ENCODE measurements at regions of chr4 and their contacts with region 1.

Region 1: DNA sequence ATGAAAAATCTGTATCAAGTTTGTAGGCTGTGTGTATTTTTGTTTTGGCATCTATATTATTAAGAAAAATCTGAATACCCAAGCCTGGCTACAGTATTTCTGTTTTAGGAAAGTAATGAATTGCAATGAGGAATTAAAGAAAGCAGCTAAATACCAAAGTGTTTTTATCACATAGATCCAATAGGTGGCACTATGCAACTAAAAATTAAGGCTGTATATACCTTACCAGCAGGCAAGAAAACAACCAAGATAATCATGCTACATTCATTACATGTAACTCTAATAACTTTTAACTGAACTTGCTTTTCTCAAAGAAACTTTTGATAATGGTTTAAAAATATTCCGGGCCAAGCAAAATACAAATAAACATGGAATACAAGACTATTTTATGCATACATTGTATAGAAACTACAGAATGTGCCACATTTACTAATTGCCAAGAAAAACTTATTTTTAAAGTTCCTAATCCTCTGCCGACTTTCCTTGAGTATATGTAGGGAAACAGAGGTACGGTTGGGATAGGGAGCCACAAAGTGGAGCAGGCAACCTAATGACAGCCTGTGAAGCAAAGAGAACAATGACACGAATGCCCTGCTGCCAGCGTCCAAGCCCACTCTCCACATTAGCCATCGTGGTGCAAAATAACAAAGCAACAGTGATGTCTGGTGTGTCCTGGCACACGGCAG is 63.7 kb downstream of the SEC24D start:
- H3K4me3 Mint-ChIP-seq: no peak overlapping the region
- H3K27ac Mint-ChIP-seq: no peak overlapping the region
- H3K4me1 Mint-ChIP-seq: no peaks in the 10 kb centered on the region
- H3K27me3 Mint-ChIP-seq: no peaks in the 10 kb centered on the region

Region 2: GRCh38 chr4:118865091-118865708 is 93.0 kb after region 1 on chr4:
- intact Hi-C with region 1: loop called (anchors 10 kb)
- H3K4me3 Mint-ChIP-seq: no peak overlapping the region
- H3K27ac Mint-ChIP-seq: no peak overlapping the region
- H3K4me1 Mint-ChIP-seq: peaks cover 7% of the 10 kb centered on the region
- H3K27me3 Mint-ChIP-seq: peaks cover 6% of the 10 kb centered on the region

Region 3: GRCh38 chr4:118888666-118889311 is 116.6 kb after region 1 on chr4 and contains the start of gene SYNPO2:
- intact Hi-C with region 1: loop called (anchors 1 kb)
- H3K4me3 Mint-ChIP-seq: peak within 1 kb of the TSS; percentile 54
- H3K27ac Mint-ChIP-seq: no peak within 1 kb of the TSS
- H3K4me1 Mint-ChIP-seq: peaks cover 16% of the 10 kb centered on the region
- H3K27me3 Mint-ChIP-seq: peaks cover 30% of the 10 kb centered on the region

Region 4: DNA sequence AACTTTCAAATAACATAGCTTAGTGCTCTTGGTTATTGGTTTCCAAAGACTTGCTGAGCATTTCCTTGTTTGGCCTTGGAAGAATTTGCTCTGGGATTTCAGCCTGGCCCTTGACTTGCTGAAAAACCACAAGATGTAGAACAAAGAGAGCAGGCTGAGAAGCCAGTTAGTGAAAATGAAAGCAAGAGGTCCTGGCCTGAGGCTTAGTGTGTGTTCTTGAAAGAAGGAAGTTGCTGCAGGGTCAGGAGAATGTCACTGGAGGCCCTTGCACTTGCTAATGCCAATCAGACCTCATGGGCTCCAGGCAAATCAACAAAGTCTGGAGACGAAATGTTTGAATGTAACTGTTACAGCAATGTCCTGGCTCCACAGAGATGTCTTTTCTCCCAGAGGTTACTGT is 195.8 kb after region 1 on chr4:
- intact Hi-C with region 1: loop called (anchors 10 kb)
- H3K4me3 Mint-ChIP-seq: no peak overlapping the region
- H3K27ac Mint-ChIP-seq: peak overlapping the region; percentile 21
- H3K4me1 Mint-ChIP-seq: peaks cover 24% of the 10 kb centered on the region
- H3K27me3 Mint-ChIP-seq: no peaks in the 10 kb centered on the region

Measured in dendritic cell treated with granulocyte-macrophage colony-stimulating factor and Interleukin-4, amounts not matched to agents 40 ng/mL and 50 ng/mL, for 4 days (primary cell).